ENCODE measurements at regions of chr10 and their contacts with region 1.

Region 1: DNA sequence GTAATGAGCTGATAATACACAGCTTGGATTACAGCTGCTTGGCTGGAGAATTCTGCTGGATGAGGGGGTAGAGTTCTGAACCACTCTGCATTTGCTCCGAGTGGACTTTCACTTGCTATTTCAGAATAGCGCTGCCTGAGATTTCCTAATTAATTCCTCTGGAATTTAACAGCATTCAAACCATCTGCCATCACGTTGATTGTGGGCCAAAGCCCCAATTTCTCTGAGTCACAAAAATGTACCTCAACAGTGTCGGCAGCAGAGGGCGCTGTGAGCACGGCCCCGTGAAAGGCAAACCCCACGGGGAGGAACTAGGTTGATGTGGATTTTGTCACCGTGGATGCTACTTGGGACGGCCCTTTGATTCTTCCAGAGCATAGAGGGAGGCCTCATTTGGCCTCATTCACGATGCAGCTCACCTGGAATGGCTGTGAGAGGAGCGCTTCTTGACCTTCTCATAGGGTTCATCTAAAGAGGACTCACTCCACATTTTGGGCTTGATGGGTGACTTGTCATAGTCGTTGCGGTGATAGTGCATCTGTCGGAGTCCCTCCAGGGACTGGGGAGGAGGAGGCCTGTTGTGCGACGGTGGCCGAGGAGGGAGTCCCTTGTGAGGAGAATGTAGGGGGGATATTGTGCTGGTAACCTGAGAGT is 73.3 kb downstream of the PRPF18 start:
- DNase-seq: peak; percentile 78
- H3K4me3 Mint-ChIP-seq: no peak overlapping the region
- H3K27ac Mint-ChIP-seq: peak overlapping the region; percentile 28
- H3K4me1 Mint-ChIP-seq: peaks cover 21% of the 10 kb centered on the region
- H3K27me3 Mint-ChIP-seq: peaks cover 23% of the 10 kb centered on the region

Region 2: DNA sequence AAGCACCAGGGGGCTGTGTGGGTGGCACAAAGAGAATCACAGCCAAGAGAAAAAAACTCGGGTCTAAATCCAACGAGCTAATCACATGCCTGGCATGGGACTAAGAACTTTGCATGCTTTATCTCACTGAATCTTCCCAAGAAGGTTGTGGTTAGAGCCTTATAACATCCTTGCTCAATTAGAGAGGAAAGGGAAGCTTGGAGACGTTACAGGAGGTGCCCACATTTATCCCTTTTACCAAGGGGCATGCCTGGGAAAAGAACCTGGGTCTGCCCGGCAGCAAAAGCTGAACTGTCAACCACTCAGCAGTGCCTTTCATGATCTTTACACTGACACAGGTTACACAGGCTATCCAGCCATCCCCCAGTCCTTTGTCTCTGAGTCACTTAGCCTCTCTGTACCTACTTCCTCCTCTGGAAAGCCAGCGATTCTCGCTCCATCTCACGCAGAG is 116.9 kb after region 1 on chr10:
- CTCF ChIA-PET with region 1: interaction called, 15 read pairs
- DNase-seq: no peak
- H3K4me3 Mint-ChIP-seq: no peak overlapping the region
- H3K27ac Mint-ChIP-seq: no peak overlapping the region
- H3K4me1 Mint-ChIP-seq: peaks cover 3% of the 10 kb centered on the region
- H3K27me3 Mint-ChIP-seq: peaks cover 28% of the 10 kb centered on the region

Region 3: DNA sequence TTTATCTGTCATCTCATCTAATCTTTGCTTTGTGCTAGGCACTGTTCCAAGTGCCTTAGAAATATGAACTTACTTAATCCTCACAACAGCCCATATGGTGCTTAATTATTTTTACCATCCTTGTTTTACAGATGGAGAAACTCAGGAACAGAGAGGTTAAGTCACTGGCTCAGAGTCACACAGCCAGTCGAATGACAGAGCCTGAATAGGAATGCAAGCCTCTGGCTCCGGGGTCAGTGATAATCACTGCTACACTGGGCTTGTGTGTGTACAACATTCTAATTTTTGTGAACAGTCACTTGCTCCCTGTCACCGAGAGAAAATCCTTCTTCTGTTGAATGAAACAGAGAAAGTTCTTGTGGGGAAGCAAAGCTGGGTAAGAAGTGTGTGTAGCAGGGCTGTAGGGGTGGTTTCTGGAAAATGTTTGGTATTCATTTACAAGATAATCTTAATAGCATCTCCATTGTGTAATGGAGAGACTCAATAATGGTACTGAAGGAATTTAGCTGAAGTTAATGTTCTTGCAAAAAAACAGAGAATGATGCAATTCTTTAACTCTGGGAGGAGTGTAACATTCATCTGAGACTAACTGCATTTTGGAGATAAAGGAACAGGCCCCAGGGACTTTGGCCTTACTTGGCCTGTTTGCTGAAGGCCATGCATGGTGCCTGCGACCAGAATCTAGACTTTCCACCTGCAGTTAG is 380.1 kb after region 1 on chr10:
- CTCF ChIA-PET with region 1: no interaction called
- DNase-seq: no peak
- H3K4me3 Mint-ChIP-seq: no peak overlapping the region
- H3K27ac Mint-ChIP-seq: no peak overlapping the region
- H3K4me1 Mint-ChIP-seq: peaks cover 2% of the 10 kb centered on the region
- H3K27me3 Mint-ChIP-seq: peaks cover 13% of the 10 kb centered on the region